ENCODE measurements at regions of chr5 and their contacts with region 1.

Region 1: GRCh38 chr5:126776497-126777256 is at the start of gene LMNB1:
- DNase-seq: peak; percentile 98
- ATAC-seq: peak; percentile 97
- total RNA-seq, gene LMNB1: 3.7 TPM

Region 2: GRCh38 chr5:126656396-126657007 is 120.2 kb before region 1 on chr5:
- intact Hi-C with region 1: loop called (anchors 5 kb)
- DNase-seq: no peak
- ATAC-seq: no peak

Region 3: DNA sequence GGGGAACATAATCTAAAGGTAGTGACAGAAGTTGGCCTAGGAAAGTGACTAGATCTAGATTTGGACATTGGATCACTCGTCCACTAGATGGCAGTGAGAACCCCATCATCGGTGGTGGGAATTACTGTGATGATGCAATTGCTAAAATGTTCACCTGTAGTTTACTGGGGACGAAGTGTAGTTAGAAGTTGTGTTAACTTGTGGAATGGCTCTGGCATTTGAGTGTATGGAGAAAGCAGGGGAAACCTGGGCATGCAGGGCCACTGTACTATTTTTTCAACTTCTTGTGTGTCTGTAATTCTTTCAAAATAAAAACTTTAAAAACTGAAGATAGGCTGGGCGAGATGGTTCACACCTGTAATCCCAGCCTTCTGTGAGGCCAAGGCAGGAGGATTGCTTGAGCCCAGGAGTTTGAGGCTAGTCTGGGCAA is 100.5 kb before region 1 on chr5:
- intact Hi-C with region 1: loop called (anchors 1 kb)
- DNase-seq: no peak
- ATAC-seq: peak; percentile 64

Region 4: DNA sequence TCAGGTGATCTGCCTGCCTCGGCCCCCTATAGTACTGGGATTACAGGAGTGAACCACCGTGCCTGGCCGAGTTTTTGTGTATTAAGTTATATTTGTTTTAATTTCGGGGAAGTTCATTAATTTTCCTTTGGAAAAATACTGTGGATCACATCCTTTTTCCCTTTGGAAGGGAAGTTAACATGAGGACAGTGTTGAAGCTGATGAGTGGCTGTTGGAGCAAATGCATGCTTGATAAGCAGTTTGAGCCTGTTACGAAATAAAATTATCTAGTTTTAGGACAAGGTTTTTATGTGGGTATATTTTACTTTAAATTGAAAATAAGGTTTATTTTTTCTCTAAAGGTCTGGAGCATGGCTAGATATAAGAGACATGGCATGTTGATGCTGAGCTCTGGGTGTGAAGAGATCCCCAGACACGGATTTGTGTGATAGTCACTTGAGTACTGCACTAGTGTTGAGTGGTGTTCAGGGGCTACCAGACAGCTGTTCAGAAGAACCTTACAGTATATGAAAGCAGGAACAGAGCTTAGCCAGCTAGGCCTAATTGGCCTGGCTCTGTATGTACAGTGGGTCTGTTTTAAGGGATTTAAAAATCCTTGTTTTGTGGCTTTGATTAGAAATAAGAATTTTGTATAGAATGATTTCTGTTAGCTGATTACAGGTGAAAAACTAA is 17.6 kb after region 1 on chr5:
- intact Hi-C with region 1: no loop called
- DNase-seq: no peak
- ATAC-seq: no peak

Region 5: DNA sequence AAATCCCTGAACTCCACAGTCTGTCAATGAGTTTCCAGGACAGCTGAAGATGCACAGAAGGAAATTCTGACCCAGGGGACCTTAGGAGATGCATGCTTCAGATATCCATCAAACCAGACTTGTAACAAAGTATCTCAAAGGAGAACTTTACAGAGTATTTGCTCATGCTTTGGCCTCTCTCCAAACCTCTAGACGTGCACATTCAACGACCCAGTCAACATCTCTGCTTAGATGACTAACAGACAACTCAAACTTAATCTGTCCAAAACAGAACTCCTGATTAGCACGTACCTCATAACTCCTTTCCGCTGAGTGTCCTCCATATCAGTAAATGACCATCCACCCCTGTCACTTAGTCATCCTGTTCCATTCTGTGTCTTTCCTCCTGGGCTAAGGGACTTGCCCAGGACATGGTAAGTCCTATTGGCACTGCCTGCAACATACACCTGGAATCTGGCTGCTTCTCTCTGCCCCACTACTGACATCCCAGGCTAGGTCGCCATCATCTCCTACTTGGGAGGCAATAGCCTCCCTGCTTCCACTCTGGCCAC is 107.7 kb after region 1 on chr5:
- intact Hi-C with region 1: no loop called
- DNase-seq: no peak
- ATAC-seq: peak; percentile 68

Region 6: GRCh38 chr5:127296321-127296720 is 519.6 kb after region 1 on chr5:
- intact Hi-C with region 1: no loop called
- DNase-seq: no peak
- ATAC-seq: no peak